HEK293 (cell line): ENCODE measurements at regions of chr19 and their contacts with region 1.

Region 1: DNA sequence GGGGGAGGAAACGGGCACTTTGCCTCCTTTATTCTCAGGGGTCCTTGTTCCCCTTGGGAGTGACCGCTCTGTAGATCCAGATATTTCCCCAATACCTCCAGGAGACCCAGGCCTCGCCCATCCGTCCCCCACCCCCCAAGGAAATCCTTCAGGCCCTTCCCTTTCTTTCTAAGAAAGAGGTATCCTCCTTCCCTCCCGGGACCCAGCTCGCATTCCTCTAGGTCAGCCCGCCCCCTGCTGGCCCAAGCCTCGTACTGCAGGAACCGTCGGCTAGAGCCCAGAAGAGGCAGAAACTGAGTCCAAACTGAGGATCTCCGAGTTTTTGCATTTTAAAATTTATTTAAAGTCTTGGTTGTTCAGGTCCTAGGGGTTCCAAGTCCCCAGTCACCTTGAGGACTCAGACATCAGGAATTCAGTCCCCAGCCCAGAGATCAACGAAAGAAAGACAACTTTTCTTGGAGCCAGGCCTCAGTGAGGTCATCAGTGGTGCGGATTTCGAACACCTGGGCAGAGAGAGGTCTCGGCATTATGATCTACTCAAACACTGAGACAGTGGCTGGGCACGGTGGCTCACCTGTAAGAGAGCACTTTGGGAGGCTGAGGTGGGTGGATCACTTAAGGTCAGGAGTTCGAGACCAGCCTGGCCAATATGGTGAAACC is 7.5 kb upstream of the LRFN1 start:
- H3K4me3 ChIP-seq: no peak overlapping the region
- H3K27ac ChIP-seq: no peak overlapping the region
- H3K4me1 ChIP-seq: no peaks in the 10 kb centered on the region; the same call in 1 of the 2 replicates
- CTCF ChIP-seq: peak; percentile 95

Region 2: GRCh38 chr19:39187559-39187957 is 140.6 kb before region 1 on chr19:
- CTCF ChIA-PET with region 1: interaction called, 12 read pairs
- POLR2A ChIA-PET with region 1: interaction called, 5 read pairs
- H3K4me3 ChIP-seq: no peak overlapping the region
- H3K27ac ChIP-seq: 0 out of 2 replicates have a peak overlapping the region, but pooled peaks have one; percentile 24
- H3K4me1 ChIP-seq: 0 out of 2 replicates have a peak, but pooled peaks cover 4% of the 10 kb centered on the region
- CTCF ChIP-seq: no peak

Region 3: GRCh38 chr19:39212375-39212742 is 115.8 kb before region 1 on chr19:
- CTCF ChIA-PET with region 1: interaction called, 36 read pairs
- POLR2A ChIA-PET with region 1: interaction called, 8 read pairs
- H3K4me3 ChIP-seq: no peak overlapping the region
- H3K27ac ChIP-seq: no peak overlapping the region
- H3K4me1 ChIP-seq: no peaks in the 10 kb centered on the region
- CTCF ChIP-seq: peak; percentile 76

Region 4: GRCh38 chr19:39218230-39219007 is 109.8 kb before region 1 on chr19:
- CTCF ChIA-PET with region 1: interaction called, 36 read pairs
- POLR2A ChIA-PET with region 1: no interaction called
- H3K4me3 ChIP-seq: no peak overlapping the region
- H3K27ac ChIP-seq: no peak overlapping the region
- H3K4me1 ChIP-seq: no peaks in the 10 kb centered on the region
- CTCF ChIP-seq: no peak

Region 5: GRCh38 chr19:39310558-39311311 is 17.4 kb before region 1 on chr19:
- CTCF ChIA-PET with region 1: interaction called, 16 read pairs
- POLR2A ChIA-PET with region 1: no interaction called
- H3K4me3 ChIP-seq: no peak overlapping the region
- H3K27ac ChIP-seq: no peak overlapping the region
- H3K4me1 ChIP-seq: peaks cover 13% of the 10 kb centered on the region
- CTCF ChIP-seq: no peak

Region 6: DNA sequence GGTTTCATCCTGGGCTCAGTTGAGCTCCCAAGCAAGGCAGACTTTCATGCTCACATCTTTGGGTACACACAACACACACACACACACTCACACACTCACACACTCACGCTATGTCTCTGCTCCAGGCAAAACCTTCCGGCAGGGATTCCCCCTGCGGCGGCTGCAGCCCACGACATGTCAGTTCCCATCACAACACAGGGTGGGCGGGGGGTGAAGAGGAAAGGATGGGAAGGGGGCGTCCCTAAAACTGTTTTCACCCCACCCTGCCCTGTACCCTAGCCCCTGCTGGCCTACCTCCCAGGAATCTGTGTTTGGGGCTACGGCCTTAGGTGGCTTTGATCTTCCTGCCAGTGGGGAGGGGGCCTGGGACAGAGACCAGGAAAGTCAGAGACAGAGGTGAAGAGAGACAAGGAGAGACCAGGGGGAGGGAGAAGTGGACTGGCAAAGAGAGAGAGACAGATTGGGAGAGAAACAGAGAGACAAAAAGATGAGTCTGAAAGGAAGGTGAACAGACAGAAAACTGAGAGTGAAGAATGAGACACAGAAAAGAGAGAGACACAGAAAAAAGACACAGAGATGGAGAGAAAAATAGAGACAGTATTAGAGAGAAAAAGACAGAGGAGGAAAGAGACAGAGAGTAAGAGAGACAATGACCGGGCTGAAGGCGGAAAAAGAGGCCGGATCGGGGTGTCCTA is 11.4 kb before region 1 on chr19:
- CTCF ChIA-PET with region 1: interaction called, 16 read pairs
- POLR2A ChIA-PET with region 1: no interaction called
- H3K4me3 ChIP-seq: no peak overlapping the region
- H3K27ac ChIP-seq: no peak overlapping the region
- H3K4me1 ChIP-seq: peaks cover 9% of the 10 kb centered on the region
- CTCF ChIP-seq: no peak